A549 (cell line): ENCODE measurements at regions of chr19 and their contacts with region 1.

Region 1: GRCh38 chr19:14059093-14059480 is 2.8 kb downstream of the PALM3 start:
- DNase-seq: no peak
- ATAC-seq: peak in 1 of 2 experiments; percentile 61; a peak in 3 of 6 replicates
- H3K4me3 ChIP-seq: no peak overlapping the region
- H3K27ac ChIP-seq: peak overlapping the region in 1 of 2 experiments; percentile 87; a peak in 2 of 6 replicates
- H3K4me1 ChIP-seq: peaks cover 20% of the 10 kb centered on the region
- CTCF ChIP-seq: peak; percentile 66
- EP300 ChIP-seq: no peak
- POLR2A ChIP-seq: no peak
- RAD21 ChIP-seq: no peak

Region 2: DNA sequence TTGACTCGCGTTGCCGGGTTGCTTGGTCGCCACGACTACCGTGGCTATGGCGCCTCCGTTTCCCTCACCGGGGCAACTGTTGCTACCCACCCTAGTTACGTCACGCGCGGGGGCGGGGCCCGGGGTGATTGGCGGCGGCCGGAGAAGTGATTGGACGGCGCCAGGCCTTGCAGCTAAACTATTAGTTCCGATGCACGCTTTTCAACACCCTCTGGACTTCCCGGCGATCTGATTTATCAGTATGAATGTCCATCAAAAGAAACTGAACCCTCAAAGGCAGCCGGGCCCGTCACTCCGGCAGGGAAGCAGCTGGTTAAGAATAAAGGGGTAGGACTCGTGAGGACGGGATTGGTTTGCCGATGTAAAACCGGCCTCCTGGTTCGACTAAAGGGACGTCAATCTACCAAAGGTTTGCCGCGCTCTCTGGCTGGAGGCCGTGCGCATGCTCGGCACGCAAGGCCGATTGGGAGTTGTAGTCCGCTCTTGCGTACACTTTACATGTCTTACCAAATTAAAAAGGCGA is 52.8 kb before region 1 on chr19 and contains the start of gene RFX1:
- CTCF ChIA-PET with region 1: interaction called, 10 read pairs
- POLR2A ChIA-PET with region 1: no interaction called
- DNase-seq: peak; percentile 80 to 99
- ATAC-seq: peak; percentile 90 to 95
- H3K4me3 ChIP-seq: peak within 1 kb of the TSS; percentile 74
- H3K27ac ChIP-seq: peak within 1 kb of the TSS; percentile 91 to 100
- H3K4me1 ChIP-seq: peaks cover 14% of the 10 kb centered on the region; the same call in 1 of the 3 replicates
- CTCF ChIP-seq: no peak
- EP300 ChIP-seq: no peak
- POLR2A ChIP-seq: no peak
- RAD21 ChIP-seq: no peak
- polyA plus RNA-seq, gene RFX1: 0.57 and 0.79 TPM in 2 replicates

Region 3: DNA sequence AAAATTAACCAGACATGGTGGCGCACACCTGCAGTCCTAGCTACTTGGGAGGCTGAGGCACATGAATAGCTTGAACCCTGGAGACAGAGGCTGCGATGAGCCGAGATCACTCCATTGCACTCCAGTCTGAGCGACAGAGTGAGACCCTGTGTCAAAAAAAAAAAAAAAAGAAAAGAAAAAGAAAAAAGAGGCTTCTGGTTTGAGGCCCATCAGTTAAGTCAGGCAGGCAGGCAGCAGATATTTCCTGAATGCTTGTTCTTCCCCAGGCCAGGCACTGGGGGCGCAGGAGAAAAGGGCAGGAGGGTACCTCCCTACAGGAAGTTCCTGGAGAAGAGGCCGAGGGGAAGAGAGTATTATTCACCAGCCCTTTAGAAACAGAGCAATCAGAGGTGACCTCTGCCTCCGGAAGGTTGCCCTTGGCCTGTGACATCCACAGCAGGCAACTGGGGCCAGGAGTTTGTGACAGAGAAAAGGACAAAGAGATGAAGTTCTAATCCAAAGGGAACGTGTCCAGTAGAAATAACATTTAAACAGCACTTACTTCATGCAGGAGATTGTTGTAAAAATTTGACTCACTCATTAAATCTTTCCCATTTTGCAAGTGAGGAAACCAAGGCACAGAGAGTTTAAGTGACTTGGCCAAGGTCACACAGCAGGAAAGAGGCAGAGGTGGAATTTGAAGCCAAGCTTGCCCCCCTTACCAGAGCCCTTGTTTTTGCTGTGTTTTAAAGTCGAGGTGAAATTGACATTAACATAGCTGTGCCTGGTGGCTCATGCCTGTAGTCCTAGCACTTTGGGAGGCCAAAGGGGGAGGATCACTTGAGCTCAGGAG is 35.5 kb before region 1 on chr19:
- CTCF ChIA-PET with region 1: interaction called, 12 read pairs
- POLR2A ChIA-PET with region 1: no interaction called
- DNase-seq: peak; percentile 58 to 71
- ATAC-seq: peak; percentile 92 to 96
- H3K4me3 ChIP-seq: no peak overlapping the region
- H3K27ac ChIP-seq: peak overlapping the region; percentile 49 to 68; a peak in 4 of 6 replicates
- H3K4me1 ChIP-seq: peaks cover 5% of the 10 kb centered on the region; the same call in 1 of the 3 replicates
- CTCF ChIP-seq: peak; percentile 17; the same call in 2 of the 3 replicates
- EP300 ChIP-seq: no peak
- POLR2A ChIP-seq: no peak
- RAD21 ChIP-seq: no peak

Region 4: GRCh38 chr19:14031719-14032480 is 27.2 kb before region 1 on chr19 and contains the start of gene IL27RA:
- CTCF ChIA-PET with region 1: interaction called, 12 read pairs
- POLR2A ChIA-PET with region 1: interaction called, 3 read pairs
- DNase-seq: peak; percentile 59 to 68
- ATAC-seq: peak; percentile 89 to 90
- H3K4me3 ChIP-seq: peak within 1 kb of the TSS; percentile 69
- H3K27ac ChIP-seq: peak within 1 kb of the TSS; percentile 88
- H3K4me1 ChIP-seq: peaks cover 4% of the 10 kb centered on the region; the same call in 1 of the 3 replicates
- CTCF ChIP-seq: peak; percentile 46; the same call in 2 of the 3 replicates
- EP300 ChIP-seq: no peak
- POLR2A ChIP-seq: peak; percentile 16; the same call in 1 of the 2 replicates
- RAD21 ChIP-seq: peak; percentile 39 to 43; a peak in 4 of 5 replicates
- polyA plus RNA-seq, gene IL27RA: 3.0 and 3.1 TPM in 2 replicates

Region 5: DNA sequence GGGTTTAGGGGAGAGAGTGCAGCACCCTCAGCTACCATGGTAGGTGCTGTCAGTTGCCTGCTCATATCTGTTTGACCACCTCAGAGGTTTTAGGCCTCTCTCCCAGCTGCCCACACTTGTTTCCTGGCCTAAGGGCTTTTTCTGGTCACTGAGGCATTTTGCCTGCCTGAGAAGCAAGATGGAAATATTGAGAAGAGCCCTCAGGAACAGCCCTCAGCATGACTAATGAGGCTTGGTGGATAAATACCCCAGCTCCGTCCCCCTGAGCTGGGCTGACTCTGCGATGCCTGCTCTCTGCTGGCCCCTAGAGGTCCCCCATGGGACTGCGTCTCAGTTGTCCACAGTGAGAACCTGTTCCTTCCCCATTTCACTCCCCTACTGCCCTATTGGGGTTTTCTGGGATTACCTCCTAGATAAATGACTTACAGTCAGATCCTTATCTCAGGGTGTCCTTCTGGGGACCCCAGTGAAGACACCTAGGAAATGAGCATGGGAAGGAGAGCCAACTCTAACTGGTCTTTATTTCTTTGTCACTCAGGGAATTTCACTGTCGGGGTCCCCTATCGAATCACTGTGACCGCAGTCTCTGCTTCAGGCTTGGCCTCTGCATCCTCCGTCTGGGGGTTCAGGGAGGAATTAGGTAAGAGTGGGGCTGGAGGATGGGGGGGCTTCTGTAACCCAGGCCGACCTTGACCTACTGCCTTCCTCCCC is 10.5 kb before region 1 on chr19:
- CTCF ChIA-PET with region 1: interaction called, 33 read pairs
- POLR2A ChIA-PET with region 1: interaction called, 3 read pairs
- DNase-seq: peak; percentile 44 to 54
- ATAC-seq: peak in 1 of 2 experiments; percentile 69; a peak in 3 of 6 replicates
- H3K4me3 ChIP-seq: no peak overlapping the region
- H3K27ac ChIP-seq: no peak overlapping the region
- H3K4me1 ChIP-seq: no peaks in the 10 kb centered on the region
- CTCF ChIP-seq: peak; percentile 30
- EP300 ChIP-seq: no peak
- POLR2A ChIP-seq: no peak
- RAD21 ChIP-seq: peak in 1 of 2 experiments; percentile 24; a peak in 1 of 5 replicates

Region 6: DNA sequence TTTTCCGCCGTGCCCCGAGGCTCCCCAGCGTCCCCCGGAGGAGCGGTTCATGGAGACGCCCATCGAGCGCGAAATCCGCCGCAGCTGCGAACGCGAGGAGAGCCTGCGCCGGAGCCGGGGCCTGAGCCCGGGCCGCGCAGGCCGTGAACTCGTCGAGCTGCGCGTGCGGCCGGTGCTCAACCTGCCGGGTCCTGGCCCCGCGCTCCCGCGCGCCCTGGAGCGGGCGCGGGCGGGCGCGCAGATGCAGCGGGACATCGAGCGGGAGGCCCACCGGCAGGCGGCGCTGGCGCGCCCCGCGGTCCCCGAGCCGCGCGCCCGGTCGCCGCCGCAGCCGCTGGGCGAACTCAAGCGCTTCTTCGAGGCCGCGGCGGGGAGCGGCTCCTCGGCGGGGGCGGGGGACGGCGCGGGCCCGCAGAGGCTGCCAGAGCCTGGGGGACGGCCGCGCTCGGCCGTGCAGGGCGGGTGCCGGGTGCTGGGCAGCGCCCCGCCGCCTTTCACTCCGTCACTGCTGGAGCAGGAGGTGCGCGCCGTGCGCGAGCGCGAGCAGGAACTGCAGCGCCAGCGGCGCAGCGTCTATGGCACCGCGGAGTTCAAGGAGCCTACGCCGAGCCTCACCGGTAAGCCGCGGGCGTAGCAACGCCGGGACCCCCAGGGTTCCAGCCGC is 14.3 kb after region 1 on chr19:
- CTCF ChIA-PET with region 1: interaction called, 93 read pairs
- POLR2A ChIA-PET with region 1: interaction called, 4 read pairs
- DNase-seq: peak in 1 of 2 experiments; percentile 78
- ATAC-seq: peak; percentile 60 to 72
- H3K4me3 ChIP-seq: peak overlapping the region; percentile 83
- H3K27ac ChIP-seq: peak overlapping the region; percentile 94 to 99
- H3K4me1 ChIP-seq: peaks cover 4% of the 10 kb centered on the region; the same call in 1 of the 3 replicates
- CTCF ChIP-seq: peak; percentile 87
- EP300 ChIP-seq: no peak
- POLR2A ChIP-seq: no peak
- RAD21 ChIP-seq: no peak

Region 7: DNA sequence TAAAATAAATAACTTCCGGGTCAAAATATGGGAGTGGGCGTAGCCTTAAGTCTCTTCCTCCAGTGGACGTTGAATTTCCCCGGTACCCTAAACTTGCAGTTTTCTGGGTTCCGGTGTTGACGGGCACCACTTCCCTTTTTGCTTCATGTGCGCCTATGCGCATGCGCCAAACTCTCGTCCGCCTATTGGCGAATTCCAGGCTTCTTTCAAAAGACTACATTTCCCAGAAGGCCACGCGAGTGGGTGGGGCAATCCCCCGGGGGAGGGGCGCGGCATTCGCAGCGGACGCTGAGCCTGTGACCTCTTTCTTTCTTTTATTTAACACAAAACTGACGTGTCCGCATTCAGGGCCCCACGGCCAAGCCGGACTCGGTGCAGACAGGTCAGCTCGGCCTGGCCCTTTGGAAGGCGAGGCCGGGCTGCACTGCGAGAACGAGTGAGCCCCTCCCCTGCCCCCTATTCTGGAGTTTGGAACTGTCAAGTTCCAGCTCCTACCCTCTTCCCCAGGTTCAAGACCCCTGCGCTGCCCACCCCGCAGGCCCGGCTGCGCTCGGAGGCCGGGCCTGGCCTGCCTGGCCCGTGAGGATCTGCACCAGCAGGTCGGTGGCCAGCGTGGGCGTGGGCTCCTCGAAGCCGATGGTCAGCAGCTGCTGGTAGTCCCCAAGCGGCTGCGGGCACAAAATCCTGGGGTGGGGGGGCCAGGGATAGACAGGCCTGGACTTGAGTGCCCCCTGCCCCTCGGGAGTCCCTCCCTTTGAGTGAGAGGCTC is 22.4 kb after region 1 on chr19:
- CTCF ChIA-PET with region 1: interaction called, 14 read pairs
- POLR2A ChIA-PET with region 1: no interaction called
- DNase-seq: peak; percentile 93 to 98
- ATAC-seq: peak; percentile 95 to 96
- H3K4me3 ChIP-seq: peak overlapping the region; percentile 74
- H3K27ac ChIP-seq: peak overlapping the region; percentile 77 to 89
- H3K4me1 ChIP-seq: peaks cover 9% of the 10 kb centered on the region; the same call in 1 of the 3 replicates
- CTCF ChIP-seq: no peak
- EP300 ChIP-seq: no peak
- POLR2A ChIP-seq: peak; percentile 17; the same call in 1 of the 2 replicates
- RAD21 ChIP-seq: no peak